ENCODE measurements at regions of chr1 and their contacts with region 1.

Region 1: GRCh38 chr1:45654540-45655280 is 30.9 kb upstream of the CCDC17 start:
- DNase-seq: peak; percentile 23
- ATAC-seq: peak; percentile 99
- H3K4me3 Mint-ChIP-seq: no peak overlapping the region
- H3K27ac Mint-ChIP-seq: peak overlapping the region; percentile 2
- H3K4me1 Mint-ChIP-seq: peaks cover 15% of the 10 kb centered on the region
- H3K27me3 Mint-ChIP-seq: no peaks in the 10 kb centered on the region

Region 2: GRCh38 chr1:45809761-45810160 is 155.1 kb after region 1 on chr1:
- CTCF ChIA-PET with region 1: no interaction called
- POLR2A ChIA-PET with region 1: no interaction called
- intact Hi-C with region 1: loop called in 1 of 2 experiments (anchors 5 kb)
- DNase-seq: no peak
- ATAC-seq: no peak
- H3K4me3 Mint-ChIP-seq: no peak overlapping the region
- H3K27ac Mint-ChIP-seq: no peak overlapping the region
- H3K4me1 Mint-ChIP-seq: peaks cover 13% of the 10 kb centered on the region
- H3K27me3 Mint-ChIP-seq: no peaks in the 10 kb centered on the region

Region 3: DNA sequence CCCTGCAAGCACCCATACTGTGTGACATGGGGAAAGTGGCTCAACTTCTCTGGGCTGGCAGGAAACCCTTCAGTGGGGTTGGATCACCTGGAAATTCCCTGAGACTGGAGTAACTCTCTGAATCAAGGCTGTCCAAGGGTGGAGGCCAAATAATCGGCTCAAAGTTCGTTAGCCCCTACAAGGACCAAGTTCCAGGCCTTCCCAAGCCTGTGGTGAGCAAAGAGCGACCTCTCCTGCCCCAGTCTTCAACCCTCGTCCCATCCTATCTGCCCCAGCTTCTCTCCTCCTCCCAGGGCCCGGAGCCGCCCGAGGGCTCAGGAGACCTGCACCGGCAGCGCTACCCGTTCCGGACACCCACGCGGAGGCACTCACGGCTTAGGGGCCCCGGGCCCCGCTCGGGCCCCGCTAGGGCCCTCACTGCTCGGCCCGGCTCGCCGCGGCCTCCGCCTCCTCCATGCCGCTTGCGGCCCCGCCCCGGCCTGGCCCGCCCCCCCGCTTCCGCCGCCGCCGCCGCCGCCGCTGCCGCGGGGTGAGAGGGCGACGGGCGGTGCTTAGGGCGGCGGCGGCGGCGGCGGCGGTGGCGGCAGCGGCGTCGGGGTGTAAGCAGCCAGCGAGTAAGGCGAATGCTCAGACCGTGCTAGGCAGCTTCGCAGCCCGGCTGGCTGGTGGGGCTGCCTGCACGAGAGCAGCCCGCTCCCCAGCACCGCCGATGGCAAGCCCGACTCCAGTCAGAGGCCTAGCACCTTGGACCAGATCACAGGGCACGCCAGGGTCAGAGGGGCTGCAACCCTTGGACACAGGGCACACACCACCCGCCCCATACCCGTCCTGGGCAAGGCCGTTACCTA is 543.5 kb after region 1 on chr1 and contains the start of gene POMGNT1:
- CTCF ChIA-PET with region 1: no interaction called
- POLR2A ChIA-PET with region 1: no interaction called
- intact Hi-C with region 1: no loop called
- DNase-seq: peak; percentile 87
- ATAC-seq: peak; percentile 94
- H3K4me3 Mint-ChIP-seq: peak within 1 kb of the TSS; percentile 84
- H3K27ac Mint-ChIP-seq: peak within 1 kb of the TSS; percentile 82
- H3K4me1 Mint-ChIP-seq: peaks cover 19% of the 10 kb centered on the region
- H3K27me3 Mint-ChIP-seq: peaks cover 2% of the 10 kb centered on the region
- total RNA-seq, gene POMGNT1: 36.4 to 36.5 TPM

Measured in activated CD4-positive, alpha-beta T cell treated with anti-CD3 and anti-CD28 coated beads for 36 hours (primary cell).